ENCODE measurements at regions of chr17 and their contacts with region 1.

Region 1: GRCh38 chr17:37373530-37374159 is 2.1 kb upstream of the C17orf78 start:
- DNase-seq: peak; percentile 83
- H3K4me3 Mint-ChIP-seq: no peak overlapping the region
- H3K27ac Mint-ChIP-seq: no peak overlapping the region
- H3K4me1 Mint-ChIP-seq: peaks cover 6% of the 10 kb centered on the region
- H3K27me3 Mint-ChIP-seq: no peaks in the 10 kb centered on the region

Region 2: GRCh38 chr17:37392024-37392590 is 18.5 kb after region 1 on chr17:
- CTCF ChIA-PET with region 1: interaction called, 47 read pairs
- POLR2A ChIA-PET with region 1: interaction called, 3 read pairs
- intact Hi-C with region 1: loop called (anchors 1 kb)
- DNase-seq: no peak
- H3K4me3 Mint-ChIP-seq: no peak overlapping the region
- H3K27ac Mint-ChIP-seq: no peak overlapping the region
- H3K4me1 Mint-ChIP-seq: peaks cover 21% of the 10 kb centered on the region
- H3K27me3 Mint-ChIP-seq: no peaks in the 10 kb centered on the region

Region 3: DNA sequence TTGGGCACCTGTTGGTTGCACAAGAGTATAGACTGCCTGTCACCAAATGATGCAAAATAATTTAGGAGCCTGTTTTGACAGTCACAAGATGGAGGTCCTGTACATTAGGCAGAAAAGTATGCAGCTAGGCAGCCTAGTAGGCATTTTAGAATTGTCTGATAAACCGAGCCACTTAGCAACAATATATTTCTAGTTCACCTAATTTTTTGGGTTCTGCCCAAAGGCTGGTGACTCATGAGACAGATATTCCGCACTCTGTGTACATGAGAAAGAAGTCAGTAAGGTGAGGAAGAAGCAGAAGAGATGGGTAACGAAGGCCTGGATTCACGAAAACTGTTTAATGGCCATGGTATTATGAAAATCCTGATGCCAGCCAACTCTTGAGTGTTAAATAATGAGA is 25.8 kb after region 1 on chr17:
- CTCF ChIA-PET with region 1: interaction called, 47 read pairs
- POLR2A ChIA-PET with region 1: no interaction called
- intact Hi-C with region 1: loop called (anchors 1 kb)
- DNase-seq: no peak
- H3K4me3 Mint-ChIP-seq: no peak overlapping the region
- H3K27ac Mint-ChIP-seq: no peak overlapping the region
- H3K4me1 Mint-ChIP-seq: peaks cover 27% of the 10 kb centered on the region
- H3K27me3 Mint-ChIP-seq: no peaks in the 10 kb centered on the region